ENCODE measurements at regions of chr3 and their contacts with region 1.

Region 1: DNA sequence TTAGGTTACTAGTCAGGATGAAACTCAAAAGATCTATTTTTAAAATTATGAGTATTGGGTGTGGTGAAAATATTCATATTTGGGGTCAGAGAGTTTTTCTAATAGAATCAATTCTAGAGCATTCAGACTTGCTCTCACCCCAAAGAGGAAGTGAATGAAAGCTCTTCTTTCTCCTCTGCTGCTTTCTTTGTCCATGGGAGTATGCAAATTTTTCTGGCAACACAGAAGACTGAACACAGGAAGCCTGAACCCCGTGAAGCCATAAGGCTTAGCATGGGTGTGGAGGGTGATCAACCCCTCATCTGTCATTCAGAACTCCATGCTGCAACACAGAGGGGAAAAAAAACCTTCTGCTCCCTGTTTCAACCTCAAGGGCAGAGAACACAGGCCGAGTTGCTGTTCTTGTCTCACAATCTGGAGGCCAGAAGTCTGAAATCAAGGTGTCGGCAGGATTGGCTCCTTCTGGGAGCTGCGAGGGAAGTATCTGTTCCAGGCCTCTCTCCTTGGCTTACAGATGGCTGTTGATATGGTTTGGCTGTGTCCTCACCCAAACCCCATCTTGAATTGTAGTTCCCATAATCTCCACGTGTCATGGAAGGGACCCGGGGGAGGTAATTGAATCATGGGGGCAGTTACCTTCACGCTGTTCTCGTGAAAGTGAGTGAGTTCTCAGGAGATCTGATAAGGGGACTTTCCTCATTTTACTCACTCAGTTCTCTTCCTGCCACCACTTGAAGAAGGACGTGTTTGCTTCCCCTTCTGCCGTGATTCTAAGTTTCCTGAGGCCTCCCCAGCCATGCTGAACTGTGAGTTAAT is 33.7 kb upstream of the CD47 start:
- DNase-seq: peak; percentile 84
- H3K4me3 Mint-ChIP-seq: peak overlapping the region; percentile 90
- H3K27ac Mint-ChIP-seq: peak overlapping the region; percentile 100
- H3K4me1 Mint-ChIP-seq: peaks cover 56% of the 10 kb centered on the region
- H3K27me3 Mint-ChIP-seq: no peaks in the 10 kb centered on the region

Region 2: GRCh38 chr3:108100906-108101660 is 23.5 kb before region 1 on chr3:
- CTCF ChIA-PET with region 1: interaction called, 3 read pairs
- intact Hi-C with region 1: loop called (anchors 1 kb)
- DNase-seq: peak; percentile 59
- H3K4me3 Mint-ChIP-seq: peak overlapping the region; percentile 12
- H3K27ac Mint-ChIP-seq: no peak overlapping the region
- H3K4me1 Mint-ChIP-seq: peaks cover 43% of the 10 kb centered on the region
- H3K27me3 Mint-ChIP-seq: no peaks in the 10 kb centered on the region

Region 3: DNA sequence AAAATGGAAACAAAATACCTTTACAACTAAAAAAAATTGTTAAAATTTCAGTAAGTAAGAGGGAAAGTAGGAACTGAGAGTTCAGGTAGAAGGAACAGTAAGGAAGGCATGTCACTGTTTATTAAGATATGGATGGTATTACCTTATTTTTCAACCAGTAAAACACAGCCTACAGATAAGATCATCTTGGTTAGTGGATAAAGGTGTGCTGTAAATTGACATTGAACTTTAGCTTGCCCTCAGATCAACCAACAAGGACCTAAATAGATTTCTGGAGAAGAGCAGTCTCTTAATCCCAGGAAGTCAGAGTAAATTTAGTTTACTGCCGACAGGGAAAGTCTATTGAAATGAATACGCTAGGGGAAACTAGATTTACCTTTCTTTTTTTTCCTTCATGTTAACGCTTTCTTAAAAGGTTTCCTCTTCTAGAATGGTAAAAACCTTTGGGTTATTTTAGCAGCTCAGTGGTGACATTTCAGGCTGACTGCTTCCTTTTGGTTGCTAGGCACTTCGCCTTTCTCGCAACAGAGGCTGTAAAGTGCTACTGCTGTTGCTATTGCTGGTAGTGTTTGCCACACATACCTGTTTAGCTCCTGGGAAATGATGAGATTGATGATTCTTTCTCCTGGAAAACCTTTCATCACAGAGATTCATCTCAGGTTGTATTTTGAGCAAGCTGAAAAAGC is 477.8 kb after region 1 on chr3:
- CTCF ChIA-PET with region 1: no interaction called
- intact Hi-C with region 1: loop called (anchors 2 kb)
- DNase-seq: peak; percentile 72
- H3K4me3 Mint-ChIP-seq: peak overlapping the region; percentile 26
- H3K27ac Mint-ChIP-seq: peak overlapping the region; percentile 62
- H3K4me1 Mint-ChIP-seq: peaks cover 52% of the 10 kb centered on the region
- H3K27me3 Mint-ChIP-seq: no peaks in the 10 kb centered on the region